ENCODE measurements at regions of chr6 and their contacts with region 1.

Region 1: GRCh38 chr6:30541515-30542403 is 14.5 kb downstream of the GNL1 start:
- DNase-seq: peak; percentile 77
- H3K4me3 ChIP-seq: peak overlapping the region; percentile 34
- H3K27ac ChIP-seq: no peak overlapping the region
- H3K27me3 ChIP-seq: no peaks in the 10 kb centered on the region
- CTCF ChIP-seq: peak; percentile 98

Region 2: GRCh38 chr6:30470968-30471367 is 70.8 kb before region 1 on chr6:
- CTCF ChIA-PET with region 1: interaction called, 19 read pairs
- POLR2A ChIA-PET with region 1: no interaction called
- DNase-seq: no peak
- H3K4me3 ChIP-seq: no peak overlapping the region
- H3K27ac ChIP-seq: no peak overlapping the region
- H3K27me3 ChIP-seq: peaks cover 42% of the 10 kb centered on the region
- CTCF ChIP-seq: no peak

Region 3: DNA sequence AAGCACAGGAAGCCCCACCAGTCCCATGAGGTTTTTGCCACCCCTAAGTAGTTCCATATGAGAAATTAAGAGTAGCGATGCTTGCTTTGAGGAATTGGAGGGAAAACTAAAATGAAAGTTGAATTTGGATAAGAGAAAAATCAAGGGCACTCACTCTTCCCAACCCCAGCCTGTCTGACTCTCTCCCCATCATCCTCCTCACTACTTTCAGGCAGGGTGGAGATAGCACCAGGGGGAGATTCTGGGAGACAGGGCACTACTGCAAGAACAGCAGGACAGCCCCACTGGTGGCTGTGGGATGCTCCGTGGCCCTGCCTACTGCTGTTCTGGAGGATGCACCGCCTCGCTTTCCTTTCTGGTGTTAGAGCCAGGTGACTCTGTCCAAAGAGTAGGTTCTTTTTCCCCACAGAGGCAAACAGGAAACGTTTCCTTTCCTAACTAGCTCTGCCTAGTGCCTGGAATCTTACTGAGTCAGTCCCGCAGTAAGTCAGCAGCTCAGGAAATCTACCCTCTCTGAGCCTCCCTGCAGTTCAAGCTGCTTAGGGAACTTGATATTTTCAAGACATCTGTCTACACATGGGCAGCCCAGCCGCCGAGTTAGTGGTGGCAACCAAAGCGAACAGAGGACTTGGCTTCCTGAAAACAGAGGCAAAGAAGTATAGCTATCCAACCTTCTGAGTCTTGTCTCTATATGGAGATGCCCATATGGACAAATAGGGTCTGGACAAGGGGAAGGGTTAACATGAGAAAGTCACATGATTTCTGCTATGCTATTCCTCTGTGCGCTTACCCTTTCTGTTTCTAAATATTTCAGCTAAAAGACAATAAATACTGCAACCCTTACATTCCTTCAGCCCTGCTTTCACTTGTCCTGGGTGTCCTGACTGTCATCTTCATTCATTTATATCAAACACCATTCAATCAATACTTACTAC is 41.1 kb before region 1 on chr6:
- CTCF ChIA-PET with region 1: interaction called, 41 read pairs
- POLR2A ChIA-PET with region 1: no interaction called
- DNase-seq: no peak
- H3K4me3 ChIP-seq: no peak overlapping the region
- H3K27ac ChIP-seq: peak overlapping the region; percentile 21
- H3K27me3 ChIP-seq: no peaks in the 10 kb centered on the region
- CTCF ChIP-seq: no peak

Region 4: GRCh38 chr6:30556066-30556905 is 14.5 kb after region 1 on chr6 and contains the start of gene GNL1:
- CTCF ChIA-PET with region 1: interaction called, 101 read pairs
- POLR2A ChIA-PET with region 1: no interaction called
- DNase-seq: peak; percentile 65
- H3K4me3 ChIP-seq: peak within 1 kb of the TSS; percentile 100
- H3K27ac ChIP-seq: peak within 1 kb of the TSS; percentile 97
- H3K27me3 ChIP-seq: no peaks in the 10 kb centered on the region
- CTCF ChIP-seq: 0 out of 2 replicates have a peak, but pooled peaks have one; percentile 8
- polyA plus RNA-seq, gene GNL1: 41.7 and 50.0 TPM in 2 replicates

Region 5: DNA sequence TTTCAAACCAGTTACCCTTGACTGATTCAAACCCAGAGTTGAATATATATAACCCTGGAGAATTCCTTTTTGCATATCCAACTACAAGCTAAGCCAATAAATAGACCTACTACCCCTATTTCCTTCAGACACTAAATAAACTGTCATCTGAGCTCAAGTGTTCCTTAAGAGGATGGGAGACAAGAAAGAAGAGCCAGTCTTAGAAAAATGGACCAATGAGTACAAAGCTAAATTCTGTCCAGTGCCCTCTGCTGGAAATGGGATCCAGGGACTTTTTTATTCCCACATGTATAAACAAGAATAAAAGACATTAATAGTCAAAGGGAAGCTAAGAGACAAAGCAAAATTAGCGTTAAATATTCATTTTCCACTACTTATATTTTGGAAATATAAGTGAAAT is 70.4 kb after region 1 on chr6:
- CTCF ChIA-PET with region 1: interaction called, 18 read pairs
- POLR2A ChIA-PET with region 1: no interaction called
- DNase-seq: no peak
- H3K4me3 ChIP-seq: no peak overlapping the region
- H3K27ac ChIP-seq: no peak overlapping the region
- H3K27me3 ChIP-seq: no peaks in the 10 kb centered on the region
- CTCF ChIP-seq: peak; percentile 52

Measured in AG04450 (cell line).